ENCODE measurements at regions of chr3 and their contacts with region 1.

Region 1: DNA sequence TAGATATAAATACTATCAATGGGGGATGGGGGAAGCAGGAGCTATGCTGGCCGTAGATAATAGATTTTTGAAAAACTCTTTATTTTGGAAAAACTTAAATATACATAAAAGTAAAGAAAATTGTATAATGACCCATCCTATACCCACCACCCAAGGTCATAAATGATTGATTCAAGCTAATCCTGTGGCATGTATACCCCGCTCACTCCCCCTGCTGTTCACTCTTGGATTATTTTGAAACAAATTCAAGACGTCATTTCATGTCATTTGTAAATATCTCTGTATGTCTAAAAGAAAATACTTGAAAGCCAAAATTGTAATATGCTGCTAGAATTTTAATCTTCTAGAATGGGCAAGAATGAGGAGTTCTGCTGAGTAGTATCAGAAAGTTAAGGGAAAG is 241.8 kb downstream of the FEZF2 start:
- DNase-seq: no peak
- H3K4me3 ChIP-seq: no peak overlapping the region
- H3K27ac ChIP-seq: no peak overlapping the region
- H3K4me1 ChIP-seq: peaks cover 0 to 3% (median 0%) of the 10 kb centered on the region in 4 experiments; a peak in 1 of 7 replicates
- H3K27me3 ChIP-seq: no peaks in the 10 kb centered on the region
- CTCF ChIP-seq: peak in 2 of 3 experiments; percentile 27 to 39; a peak in 2 of 4 replicates
- EP300 ChIP-seq: no peak
- POLR2A ChIP-seq: no peak
- RAD21 ChIP-seq: peak; percentile 57 to 61

Region 2: DNA sequence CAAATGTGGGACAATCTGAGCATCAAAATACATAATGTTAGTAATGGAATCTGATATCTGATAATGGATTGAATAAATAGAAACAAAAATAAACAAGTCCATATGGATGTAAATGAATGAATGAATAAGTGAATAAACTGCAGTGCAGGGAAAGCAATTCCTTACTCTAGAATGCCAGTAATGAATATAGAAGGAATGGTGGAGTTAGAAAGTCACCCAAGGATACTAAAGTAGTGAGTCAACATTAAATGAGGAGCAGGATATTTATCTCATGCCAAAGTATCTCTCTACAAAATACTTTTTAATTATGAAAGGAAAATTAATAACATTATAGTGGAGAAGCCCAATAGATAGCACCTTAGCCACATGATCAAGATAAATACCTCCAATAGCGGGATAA is 58.6 kb before region 1 on chr3:
- CTCF ChIA-PET with region 1: no interaction called
- POLR2A ChIA-PET with region 1: no interaction called
- DNase-seq: no peak
- H3K4me3 ChIP-seq: no peak overlapping the region
- H3K27ac ChIP-seq: no peak overlapping the region
- H3K4me1 ChIP-seq: no peaks in the 10 kb centered on the region
- H3K27me3 ChIP-seq: no peaks in the 10 kb centered on the region
- CTCF ChIP-seq: no peak
- EP300 ChIP-seq: no peak
- POLR2A ChIP-seq: no peak
- RAD21 ChIP-seq: no peak

Region 3: DNA sequence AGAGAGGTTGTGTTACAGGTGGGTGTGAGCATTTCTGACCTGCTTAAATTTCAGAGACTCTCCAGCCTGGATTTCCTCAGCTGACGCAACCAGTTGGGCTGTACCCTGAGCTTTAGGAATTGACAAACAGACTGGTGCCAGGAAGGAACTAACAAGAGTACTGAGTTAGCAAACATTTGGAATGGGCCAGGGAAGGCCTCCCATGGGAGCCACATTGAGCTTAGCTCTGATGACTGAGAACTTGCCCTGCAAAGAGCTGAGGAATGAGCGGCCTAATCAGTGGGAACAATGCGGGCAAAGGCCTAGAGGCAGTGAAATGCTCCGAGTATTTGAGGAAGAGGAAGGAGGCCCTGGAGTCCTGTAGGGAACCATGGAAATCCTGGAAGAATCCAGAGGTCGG is 12.4 kb before region 1 on chr3:
- CTCF ChIA-PET with region 1: interaction called, 11 read pairs
- POLR2A ChIA-PET with region 1: interaction called, 3 read pairs
- DNase-seq: no peak
- H3K4me3 ChIP-seq: no peak overlapping the region
- H3K27ac ChIP-seq: no peak overlapping the region
- H3K4me1 ChIP-seq: peaks cover 0 to 4% (median under 1%) of the 10 kb centered on the region in 4 experiments; a peak in 1 of 7 replicates
- H3K27me3 ChIP-seq: no peaks in the 10 kb centered on the region
- CTCF ChIP-seq: no peak
- EP300 ChIP-seq: no peak
- POLR2A ChIP-seq: no peak
- RAD21 ChIP-seq: no peak

Region 4: DNA sequence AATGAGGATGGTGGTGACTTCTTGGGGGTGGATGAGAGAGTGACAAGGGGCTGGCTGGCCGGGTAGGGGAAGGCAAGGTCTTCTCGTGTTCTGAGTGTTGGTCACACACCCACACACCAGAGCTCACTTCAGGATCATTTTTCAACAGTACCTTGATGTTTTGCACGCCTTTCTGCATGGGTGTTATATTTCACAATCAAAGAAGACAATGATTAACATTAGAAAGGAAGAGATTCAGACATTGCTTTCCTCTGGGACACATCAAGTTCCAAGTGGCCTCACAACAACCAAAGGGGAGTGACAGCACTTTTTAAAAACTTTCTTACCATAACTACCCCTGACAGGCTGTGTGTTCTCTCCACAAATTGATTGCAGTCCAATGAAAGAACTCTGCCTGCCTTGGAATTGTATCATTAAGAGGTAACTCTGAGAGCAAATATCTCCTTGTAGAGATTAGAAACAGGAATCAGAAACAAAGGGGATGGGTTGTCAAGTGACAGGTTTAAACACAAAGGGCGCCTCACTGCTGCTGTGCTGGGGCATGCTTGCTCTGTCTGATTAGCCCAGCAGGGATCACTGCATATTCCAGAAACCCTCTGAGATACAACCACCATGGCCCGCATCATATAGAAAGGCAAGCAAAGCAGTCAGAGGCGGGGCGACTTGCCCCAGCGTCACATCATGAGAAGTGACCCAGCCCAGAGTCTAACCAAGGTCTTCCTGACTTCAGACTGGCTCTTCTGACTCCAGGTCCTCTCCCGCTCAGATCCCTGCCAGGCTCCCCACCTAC is 10.9 kb after region 1 on chr3:
- CTCF ChIA-PET with region 1: interaction called, 14 read pairs
- POLR2A ChIA-PET with region 1: interaction called, 5 read pairs
- DNase-seq: no peak
- H3K4me3 ChIP-seq: no peak overlapping the region
- H3K27ac ChIP-seq: no peak overlapping the region
- H3K4me1 ChIP-seq: peaks cover 0 to 6% (median 2%) of the 10 kb centered on the region in 4 experiments; a peak in 4 of 7 replicates
- H3K27me3 ChIP-seq: no peaks in the 10 kb centered on the region
- CTCF ChIP-seq: no peak
- EP300 ChIP-seq: no peak
- POLR2A ChIP-seq: no peak
- RAD21 ChIP-seq: no peak

Measured in H1 (cell line).